ENCODE measurements at regions of chr20 and their contacts with region 1.

Region 1: GRCh38 chr20:16701296-16701695 is 28.5 kb upstream of the SNRPB2 start:
- DNase-seq: peak; percentile 64
- ATAC-seq: peak; percentile 65
- H3K4me3 Mint-ChIP-seq: no peak overlapping the region
- H3K27ac Mint-ChIP-seq: no peak overlapping the region
- H3K4me1 Mint-ChIP-seq: no peaks in the 10 kb centered on the region
- H3K27me3 Mint-ChIP-seq: peaks cover 26% of the 10 kb centered on the region

Region 2: GRCh38 chr20:16712511-16712947 is 11.2 kb after region 1 on chr20:
- CTCF ChIA-PET with region 1: no interaction called
- DNase-seq: no peak
- ATAC-seq: no peak
- H3K4me3 Mint-ChIP-seq: no peak overlapping the region
- H3K27ac Mint-ChIP-seq: no peak overlapping the region
- H3K4me1 Mint-ChIP-seq: peaks cover 28% of the 10 kb centered on the region
- H3K27me3 Mint-ChIP-seq: peaks cover 47% of the 10 kb centered on the region

Region 3: DNA sequence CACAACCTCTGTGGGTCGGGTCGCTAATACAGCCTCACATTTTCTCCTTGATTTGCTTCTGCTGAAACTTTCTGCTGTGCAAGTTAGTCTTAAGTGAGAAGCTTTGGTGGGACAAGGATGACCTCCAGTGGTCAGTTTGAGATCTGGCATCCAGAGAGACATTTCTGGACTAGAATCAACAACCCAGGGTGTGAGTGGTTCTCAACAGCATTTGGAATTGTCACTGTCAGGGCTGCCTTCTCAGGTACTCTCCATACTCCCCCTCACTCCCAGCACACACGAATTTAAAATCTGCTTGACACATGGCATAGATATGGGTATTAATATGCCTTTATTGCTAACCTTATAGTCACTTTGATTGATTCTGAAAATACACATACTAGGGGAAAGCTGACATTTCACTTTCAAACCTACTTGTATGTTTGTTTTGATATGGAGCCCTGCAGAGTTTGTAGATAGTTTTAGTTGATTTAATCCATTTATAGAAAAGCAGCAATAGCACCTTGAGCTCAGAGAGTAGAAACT is 60.1 kb after region 1 on chr20:
- CTCF ChIA-PET with region 1: interaction called, 13 read pairs
- DNase-seq: peak; percentile 60
- ATAC-seq: peak; percentile 66
- H3K4me3 Mint-ChIP-seq: no peak overlapping the region
- H3K27ac Mint-ChIP-seq: no peak overlapping the region
- H3K4me1 Mint-ChIP-seq: no peaks in the 10 kb centered on the region
- H3K27me3 Mint-ChIP-seq: peaks cover 44% of the 10 kb centered on the region